ENCODE measurements at regions of chr15 and their contacts with region 1.

Region 1: GRCh38 chr15:78540141-78540928 is at the start of gene PSMA4:
- DNase-seq: peak; percentile 95
- H3K4me3 Mint-ChIP-seq: peak within 1 kb of the TSS; percentile 87
- H3K27ac Mint-ChIP-seq: peak within 1 kb of the TSS; percentile 91
- H3K4me1 Mint-ChIP-seq: peaks cover 25% of the 10 kb centered on the region
- H3K27me3 Mint-ChIP-seq: peaks cover 3% of the 10 kb centered on the region
- total RNA-seq, gene PSMA4: 220 to 226 TPM

Region 2: DNA sequence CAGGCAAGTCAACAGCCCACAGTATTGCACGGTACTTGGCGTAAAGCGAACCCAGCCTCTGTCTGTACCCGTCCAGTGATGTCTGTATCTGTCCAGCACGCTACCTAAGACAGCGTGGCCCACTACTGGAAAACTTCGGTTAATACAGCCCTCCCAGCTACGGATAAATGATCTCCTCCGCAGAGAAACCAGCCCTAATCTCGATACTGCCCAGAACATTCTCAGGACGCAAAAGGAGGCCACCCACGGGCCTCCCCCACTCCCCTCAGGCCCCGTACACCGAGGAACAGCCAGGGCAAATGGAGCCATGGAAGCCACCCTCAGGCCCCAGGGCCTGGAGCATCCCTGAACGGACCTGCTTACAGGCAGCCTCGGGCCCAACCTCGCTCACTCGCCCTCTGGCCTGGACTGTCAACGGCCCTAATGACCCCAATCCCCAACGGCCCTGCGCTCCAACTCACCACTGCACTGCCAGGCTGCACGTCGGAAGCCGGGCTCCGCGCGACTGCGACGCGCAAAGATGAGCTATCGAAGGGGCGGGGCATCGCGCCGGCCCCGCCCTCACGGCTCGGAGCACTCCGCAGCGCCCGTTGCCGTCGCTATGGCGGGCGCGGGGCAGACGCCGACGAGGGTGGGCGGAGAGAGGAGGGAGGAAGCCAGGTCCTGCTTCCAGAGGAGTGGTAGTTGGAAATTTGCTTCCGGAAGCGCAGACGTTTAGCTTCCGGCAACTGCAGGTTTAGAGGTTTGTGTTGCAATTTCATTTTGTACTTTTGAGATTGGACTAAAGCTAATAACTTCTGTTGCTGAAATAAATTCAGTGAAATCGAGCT is 241.0 kb before region 1 on chr15 and contains the start of gene SKIC8:
- CTCF ChIA-PET with region 1: interaction called, 3 read pairs
- POLR2A ChIA-PET with region 1: interaction called, 12 read pairs
- intact Hi-C with region 1: loop called (anchors 5 kb)
- DNase-seq: peak; percentile 94
- H3K4me3 Mint-ChIP-seq: peak within 1 kb of the TSS; percentile 99
- H3K27ac Mint-ChIP-seq: peak within 1 kb of the TSS; percentile 84
- H3K4me1 Mint-ChIP-seq: peaks cover 40% of the 10 kb centered on the region
- H3K27me3 Mint-ChIP-seq: no peaks in the 10 kb centered on the region
- total RNA-seq, gene SKIC8: 50.1 to 51.3 TPM

Region 3: GRCh38 chr15:78415286-78415685 is 125.0 kb before region 1 on chr15:
- CTCF ChIA-PET with region 1: no interaction called
- POLR2A ChIA-PET with region 1: no interaction called
- intact Hi-C with region 1: no loop called
- DNase-seq: no peak
- H3K4me3 Mint-ChIP-seq: no peak overlapping the region
- H3K27ac Mint-ChIP-seq: no peak overlapping the region
- H3K4me1 Mint-ChIP-seq: no peaks in the 10 kb centered on the region
- H3K27me3 Mint-ChIP-seq: peaks cover 9% of the 10 kb centered on the region

Region 4: DNA sequence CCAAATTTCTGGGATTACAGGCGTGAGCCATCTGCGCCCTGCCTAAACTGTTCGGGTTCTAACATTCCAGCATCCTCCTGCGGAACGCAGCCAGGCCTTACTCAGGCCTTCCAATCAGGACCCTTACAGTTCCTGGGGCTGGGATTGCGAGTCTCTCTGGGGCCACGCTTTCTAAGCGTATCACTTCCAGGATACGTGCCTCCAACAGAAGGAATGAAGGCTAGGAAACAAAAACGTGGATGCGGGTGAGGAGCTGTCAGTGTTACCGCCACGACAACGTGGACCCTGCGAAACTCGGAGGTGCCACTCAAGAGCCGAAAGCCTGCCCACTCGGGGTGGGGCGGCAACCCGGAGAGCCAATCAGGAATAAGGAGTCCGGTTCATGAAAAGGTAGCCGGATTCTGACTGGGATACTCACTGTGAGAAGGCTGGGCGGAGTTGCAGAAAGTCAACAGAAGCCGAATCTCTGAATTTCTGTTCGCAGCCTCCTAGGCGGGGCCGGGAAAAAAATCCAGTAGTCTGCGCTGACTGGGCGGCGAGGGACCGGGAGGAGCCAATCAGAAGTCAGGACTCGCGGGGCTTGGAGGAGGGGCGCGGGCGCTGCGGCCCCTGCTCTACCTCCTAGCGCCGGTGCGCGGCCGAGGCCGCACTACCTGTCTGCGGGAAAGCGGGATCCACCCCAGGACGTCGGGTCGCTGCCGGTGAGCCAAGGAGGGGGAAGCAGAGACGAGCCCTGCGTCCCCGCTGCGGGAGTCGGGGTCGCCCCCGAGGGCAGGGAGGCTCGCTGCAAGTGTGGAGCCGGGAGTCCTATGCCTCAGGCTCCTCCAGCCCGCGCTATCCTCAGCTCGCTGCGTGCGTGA is 33.1 kb before region 1 on chr15 and contains the start of gene HYKK:
- CTCF ChIA-PET with region 1: interaction called, 6 read pairs
- POLR2A ChIA-PET with region 1: interaction called, 5 read pairs
- intact Hi-C with region 1: loop called (anchors 1 kb)
- DNase-seq: peak; percentile 87
- H3K4me3 Mint-ChIP-seq: peak within 1 kb of the TSS; percentile 74
- H3K27ac Mint-ChIP-seq: no peak within 1 kb of the TSS
- H3K4me1 Mint-ChIP-seq: peaks cover 19% of the 10 kb centered on the region
- H3K27me3 Mint-ChIP-seq: no peaks in the 10 kb centered on the region
- total RNA-seq, gene HYKK: 2.2 to 2.7 TPM

Region 5: DNA sequence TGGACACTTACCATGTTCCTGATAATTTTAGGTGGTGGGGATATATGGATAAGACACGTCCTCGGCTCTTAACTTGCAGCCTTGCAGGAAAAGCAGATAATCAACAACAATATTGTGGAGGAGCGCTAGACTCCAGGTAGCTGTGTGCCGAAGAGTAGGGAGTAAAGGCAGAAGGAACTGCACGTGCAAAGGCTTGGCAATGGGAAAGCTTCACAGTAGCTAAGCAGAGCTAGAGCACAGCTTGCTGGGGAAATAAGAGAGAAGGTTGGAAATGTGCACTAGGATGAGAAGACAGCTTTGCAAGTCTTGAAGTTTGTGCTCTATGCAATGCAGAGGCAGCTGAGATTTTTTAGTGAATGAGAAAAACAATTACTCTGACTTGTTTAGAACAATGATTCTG is 12.3 kb after region 1 on chr15:
- CTCF ChIA-PET with region 1: interaction called, 3 read pairs
- POLR2A ChIA-PET with region 1: interaction called, 13 read pairs
- intact Hi-C with region 1: no loop called
- DNase-seq: no peak
- H3K4me3 Mint-ChIP-seq: no peak overlapping the region
- H3K27ac Mint-ChIP-seq: no peak overlapping the region
- H3K4me1 Mint-ChIP-seq: no peaks in the 10 kb centered on the region
- H3K27me3 Mint-ChIP-seq: no peaks in the 10 kb centered on the region

Region 6: GRCh38 chr15:78565097-78565951 is 25.0 kb after region 1 on chr15 and contains the start of gene CHRNA5:
- CTCF ChIA-PET with region 1: interaction called, 7 read pairs
- POLR2A ChIA-PET with region 1: interaction called, 15 read pairs
- intact Hi-C with region 1: loop called (anchors 1 kb)
- DNase-seq: peak; percentile 59
- H3K4me3 Mint-ChIP-seq: peak within 1 kb of the TSS; percentile 78
- H3K27ac Mint-ChIP-seq: no peak within 1 kb of the TSS
- H3K4me1 Mint-ChIP-seq: peaks cover 29% of the 10 kb centered on the region
- H3K27me3 Mint-ChIP-seq: peaks cover 14% of the 10 kb centered on the region
- total RNA-seq, gene CHRNA5: 4.0 to 4.5 TPM